Heart left ventricle (tissue), 16 donors: ENCODE measurements at regions of chr15 and their contacts with region 1.

Region 1: GRCh38 chr15:59199626-59200465 is 6.8 kb upstream of the LDHAL6B start:
- DNase-seq: no peak
- ATAC-seq: peak in 1 of 4 donors; percentile 7
- H3K4me3 ChIP-seq: no peak overlapping the region
- H3K27ac ChIP-seq: no peak overlapping the region
- H3K4me1 ChIP-seq: peaks cover 0 to 4% (median 0%) of the 10 kb centered on the region in 12 donors
- H3K27me3 ChIP-seq: no peaks in the 10 kb centered on the region
- CTCF ChIP-seq: no peak
- POLR2A ChIP-seq: no peak

Region 2: DNA sequence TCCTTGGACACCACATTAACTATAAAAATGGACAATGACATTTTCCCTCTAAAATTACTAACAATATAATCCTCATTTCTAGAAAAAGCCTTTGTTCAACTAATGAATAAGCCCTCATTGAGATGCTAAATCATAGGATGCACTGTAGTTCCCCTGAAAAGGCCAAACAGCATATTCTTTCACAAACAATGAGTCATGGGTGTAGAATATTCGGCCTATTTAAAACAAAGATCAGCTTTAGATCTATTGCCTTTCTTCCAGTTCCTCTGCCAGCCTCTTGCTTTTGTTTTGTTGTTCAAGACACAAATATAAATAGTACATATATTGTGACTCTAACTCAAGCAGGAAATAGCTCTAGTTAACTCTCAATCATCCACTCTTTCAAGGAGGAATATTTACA is 532.9 kb before region 1 on chr15:
- intact Hi-C with region 1: no loop called
- DNase-seq: no peak
- ATAC-seq: peak in 1 of 4 donors; percentile 20
- H3K4me3 ChIP-seq: no peak overlapping the region
- H3K27ac ChIP-seq: peak overlapping the region in 1 of 12 donors; percentile 3
- H3K4me1 ChIP-seq: peaks cover 0 to 27% (median 2%) of the 10 kb centered on the region in 12 donors
- H3K27me3 ChIP-seq: no peaks in the 10 kb centered on the region
- CTCF ChIP-seq: no peak
- POLR2A ChIP-seq: no peak

Region 3: GRCh38 chr15:59221511-59222505 is 22.0 kb after region 1 on chr15:
- intact Hi-C with region 1: loop called in 1 of 10 experiments (anchors 2 kb)
- DNase-seq: no peak
- ATAC-seq: peak in 1 of 4 donors; percentile 38
- H3K4me3 ChIP-seq: no peak overlapping the region
- H3K27ac ChIP-seq: peak overlapping the region in 1 of 12 donors; percentile 15
- H3K4me1 ChIP-seq: peaks cover 0 to 39% (median 21%) of the 10 kb centered on the region in 12 donors
- H3K27me3 ChIP-seq: no peaks in the 10 kb centered on the region
- CTCF ChIP-seq: no peak
- POLR2A ChIP-seq: no peak